GM23248 (cell line): ENCODE measurements at regions of chrX and their contacts with region 1.

Region 1: GRCh38 chrX:33156152-33156726 is 55.1 kb downstream of the DMD start:
- DNase-seq: no peak
- H3K4me3 ChIP-seq: no peak overlapping the region
- H3K27ac ChIP-seq: no peak overlapping the region
- H3K4me1 ChIP-seq: no peaks in the 10 kb centered on the region
- H3K27me3 ChIP-seq: no peaks in the 10 kb centered on the region

Region 2: DNA sequence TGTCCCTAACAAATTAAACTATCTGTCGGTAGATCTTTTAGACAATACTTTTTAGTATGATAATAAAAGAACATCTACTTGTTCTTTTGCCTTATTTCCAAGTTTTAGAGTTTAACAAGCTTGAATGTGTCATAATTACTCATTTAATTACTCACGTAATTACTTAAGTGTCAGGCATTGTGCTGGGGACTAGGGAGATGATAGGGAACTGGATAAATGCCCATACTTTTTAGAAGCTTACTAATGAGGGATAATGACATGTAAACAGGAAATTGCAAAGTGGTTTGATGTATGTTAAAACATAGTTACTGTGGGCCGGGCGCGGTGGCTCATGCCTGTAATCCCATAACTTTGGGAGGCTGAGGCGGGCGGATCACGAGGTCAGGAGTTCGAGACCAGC is 103.2 kb before region 1 on chrX:
- in situ Hi-C with region 1: loop called (anchors 25 kb)
- DNase-seq: no peak
- H3K4me3 ChIP-seq: no peak overlapping the region
- H3K27ac ChIP-seq: no peak overlapping the region
- H3K4me1 ChIP-seq: no peaks in the 10 kb centered on the region
- H3K27me3 ChIP-seq: no peaks in the 10 kb centered on the region